ENCODE measurements at regions of chr10 and their contacts with region 1.

Region 1: GRCh38 chr10:12042797-12043651 is at the start of gene UPF2:
- DNase-seq: peak; percentile 98
- total RNA-seq, gene UPF2: 15.2 TPM

Region 2: GRCh38 chr10:12056748-12057147 is 13.7 kb after region 1 on chr10:
- intact Hi-C with region 1: no loop called
- DNase-seq: no peak

Region 3: GRCh38 chr10:12068449-12069269 is 25.6 kb after region 1 on chr10 and contains the start of gene DHTKD1:
- intact Hi-C with region 1: loop called (anchors 1 kb)
- DNase-seq: peak; percentile 99
- total RNA-seq, gene DHTKD1: 25.0 TPM

Region 4: DNA sequence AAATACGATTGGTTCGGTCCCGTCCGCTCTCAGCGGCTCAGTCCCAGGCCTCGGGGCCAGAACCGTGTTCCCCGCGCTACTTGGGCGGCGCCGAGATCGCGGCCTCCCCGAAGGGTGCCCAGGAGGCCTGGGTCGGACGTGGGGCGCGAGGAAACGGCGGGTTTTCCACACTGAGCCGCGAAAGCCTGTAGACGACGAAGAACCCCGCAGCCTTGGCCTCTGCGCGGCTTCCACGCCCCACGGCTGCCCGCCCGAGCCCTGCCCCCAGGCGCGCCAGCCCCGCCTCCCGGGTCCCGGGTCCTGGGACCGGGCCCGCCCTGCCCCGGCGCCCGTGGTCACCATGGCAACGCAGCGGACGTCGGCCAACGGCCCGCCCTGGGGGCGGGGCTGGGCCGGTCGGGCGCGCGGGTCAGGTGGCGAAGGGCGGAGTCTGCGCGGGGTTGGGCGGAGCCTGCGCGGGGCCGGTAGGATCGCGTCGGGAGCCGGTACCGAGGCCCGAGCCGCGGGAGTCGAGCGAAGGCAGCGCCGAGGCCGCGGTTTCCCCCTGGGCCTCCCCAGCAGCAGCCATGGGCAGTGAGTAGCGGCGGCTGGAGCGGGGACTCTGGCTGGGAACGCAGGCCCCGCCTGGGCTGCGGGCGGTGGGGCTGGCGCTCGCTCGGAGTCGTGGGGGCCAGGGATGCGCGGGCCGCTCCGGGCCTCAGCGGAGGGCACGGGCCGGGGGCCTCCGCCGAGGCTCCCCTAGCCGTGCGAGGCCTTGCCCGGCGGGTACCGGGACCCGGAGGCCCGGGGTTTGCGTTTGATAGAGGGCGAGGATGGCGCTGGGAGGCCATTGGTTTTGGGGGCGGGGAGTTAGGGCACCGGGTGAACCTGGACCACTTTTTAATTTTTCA is 86.4 kb after region 1 on chr10 and contains the start of gene SEC61A2:
- intact Hi-C with region 1: loop called (anchors 1 kb)
- DNase-seq: peak; percentile 99
- total RNA-seq, gene SEC61A2: 14.5 TPM

Region 5: GRCh38 chr10:12195603-12196506 is 152.8 kb after region 1 on chr10 and contains the starts of genes CDC123 and NUDT5:
- intact Hi-C with region 1: loop called (anchors 10 kb)
- DNase-seq: peak; percentile 95
- total RNA-seq, gene CDC123: 44.2 TPM
- total RNA-seq, gene NUDT5: 10.5 TPM

Measured in cardiac septum (tissue), 1 donor.